Spleen (tissue), 13 donors: ENCODE measurements at regions of chr1 and their contacts with region 1.

Region 1: DNA sequence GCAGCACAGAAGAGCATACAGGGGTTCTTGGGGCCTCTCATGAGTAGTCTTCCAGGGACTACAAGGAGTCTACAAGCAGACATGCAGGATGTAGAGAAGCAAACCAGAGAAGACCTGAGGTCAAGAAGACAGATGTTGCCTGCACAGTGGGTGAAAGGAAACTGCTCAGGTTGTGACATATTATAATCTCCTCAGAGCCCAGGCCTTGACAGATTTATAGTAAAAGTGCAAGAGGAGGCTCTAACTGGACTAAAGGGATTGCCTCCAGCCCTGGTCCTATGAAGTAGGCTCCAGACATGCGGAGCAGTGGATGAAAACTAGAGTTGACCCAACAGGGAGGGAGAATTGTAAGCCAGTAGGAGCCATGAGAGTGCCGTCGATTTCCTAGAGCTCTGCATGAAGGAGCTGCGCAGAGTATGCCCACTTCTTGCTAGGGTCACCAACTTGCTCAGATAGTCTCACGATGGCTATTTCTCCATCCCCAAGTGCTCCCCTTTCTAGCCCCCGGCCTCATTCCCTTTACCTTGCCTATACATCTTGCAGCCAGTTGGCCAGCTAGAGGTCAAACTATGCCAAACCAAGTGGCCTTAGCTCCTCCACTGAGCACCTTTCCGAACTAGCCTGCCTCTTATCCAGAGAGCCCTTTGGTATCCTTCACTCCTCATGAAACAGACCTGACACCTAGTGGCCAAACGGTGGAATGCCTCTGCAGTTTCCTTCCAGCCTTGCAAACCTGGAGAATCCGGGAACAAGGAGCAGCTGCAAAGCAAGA is 36.2 kb upstream of the IPO9 start:
- DNase-seq: no peak
- H3K4me3 ChIP-seq: no peak overlapping the region
- H3K27ac ChIP-seq: peak overlapping the region in 4 of 8 donors; percentile 33 to 52 (median 50)
- H3K4me1 ChIP-seq: peaks cover 0 to 33% (median 24%) of the 10 kb centered on the region in 6 donors
- H3K27me3 ChIP-seq: no peaks in the 10 kb centered on the region
- CTCF ChIP-seq: peak; percentile 83 to 95 (median 92)
- POLR2A ChIP-seq: no peak

Region 2: DNA sequence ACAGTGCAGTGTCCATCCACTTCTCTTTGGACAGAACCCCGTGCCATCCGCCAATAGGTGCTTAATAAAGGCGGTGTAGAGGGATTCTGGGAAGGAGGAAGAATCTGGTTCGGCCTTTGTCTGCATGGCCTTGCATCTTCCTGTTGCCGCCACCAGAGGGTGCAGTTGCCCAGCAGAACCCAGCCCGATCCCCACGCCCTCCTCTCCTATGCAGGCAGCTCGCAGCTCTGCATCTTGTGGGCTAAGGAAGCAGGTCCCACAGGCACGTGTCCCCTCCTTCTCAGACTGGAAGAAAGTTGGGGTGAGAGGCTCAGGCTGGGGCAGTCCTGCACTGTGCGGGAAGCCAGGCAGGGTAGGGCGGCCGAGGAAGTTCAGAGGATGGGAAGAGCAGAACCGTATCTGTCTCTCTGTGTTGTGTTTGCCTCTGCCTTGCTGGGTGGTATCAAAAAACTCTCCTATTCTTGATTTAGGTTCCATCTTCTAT is 233.0 kb before region 1 on chr1:
- intact Hi-C with region 1: loop called (anchors 5 kb)
- DNase-seq: peak; percentile 93
- H3K4me3 ChIP-seq: no peak overlapping the region
- H3K27ac ChIP-seq: no peak overlapping the region
- H3K4me1 ChIP-seq: peaks cover 0 to 55% (median 18%) of the 10 kb centered on the region in 6 donors
- H3K27me3 ChIP-seq: peaks cover 0 to 8% (median 0%) of the 10 kb centered on the region in 7 donors
- CTCF ChIP-seq: peak; percentile 82 to 97 (median 93)
- POLR2A ChIP-seq: no peak

Region 3: GRCh38 chr1:201649761-201650622 is 142.7 kb before region 1 on chr1:
- intact Hi-C with region 1: no loop called
- DNase-seq: no peak
- H3K4me3 ChIP-seq: peak overlapping the region in 6 of 8 donors; percentile 13 to 50 (median 34)
- H3K27ac ChIP-seq: peak overlapping the region in 4 of 8 donors; percentile 27 to 43 (median 30)
- H3K4me1 ChIP-seq: peaks cover 0 to 36% (median 22%) of the 10 kb centered on the region in 6 donors
- H3K27me3 ChIP-seq: peaks cover 0 to 52% (median 23%) of the 10 kb centered on the region in 7 donors
- CTCF ChIP-seq: no peak
- POLR2A ChIP-seq: no peak

Region 4: DNA sequence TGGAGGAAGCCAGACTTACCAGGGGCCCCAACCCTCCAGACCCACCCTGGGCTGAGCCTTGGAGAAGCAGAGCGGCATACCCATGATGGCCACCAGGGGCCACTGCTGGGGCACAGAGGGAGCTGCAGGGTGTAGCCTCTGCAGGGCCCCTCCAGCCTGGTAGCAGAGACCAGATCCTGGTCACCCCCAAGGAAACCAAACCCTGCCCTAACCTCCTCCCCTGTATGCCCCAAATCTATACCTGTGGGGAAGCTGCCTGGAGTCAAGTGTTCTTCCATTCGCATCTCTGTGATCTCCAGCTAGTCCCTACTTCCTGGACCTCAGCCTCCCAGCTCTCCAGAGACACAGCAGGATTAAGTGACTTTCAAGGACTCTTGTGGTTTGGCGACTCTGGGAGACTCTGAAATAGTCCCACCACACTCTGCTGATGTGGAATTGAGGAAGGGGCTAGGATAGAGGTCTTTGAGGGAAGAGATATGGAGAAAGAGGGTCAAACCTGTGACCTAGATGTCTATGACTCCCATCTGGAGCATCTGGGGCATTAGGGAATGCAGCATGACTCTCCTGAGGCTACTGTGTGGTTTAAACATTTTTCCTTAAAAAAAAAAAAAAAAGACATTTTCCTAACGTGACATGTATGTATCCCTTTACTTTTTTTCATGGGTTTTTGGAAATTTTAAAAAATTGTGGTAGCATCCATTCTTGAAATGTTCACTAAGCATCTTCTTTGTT is 83.0 kb before region 1 on chr1:
- intact Hi-C with region 1: loop called (anchors 2 kb)
- DNase-seq: peak; percentile 89
- H3K4me3 ChIP-seq: no peak overlapping the region
- H3K27ac ChIP-seq: no peak overlapping the region
- H3K4me1 ChIP-seq: peaks cover 0 to 45% (median 15%) of the 10 kb centered on the region in 6 donors
- H3K27me3 ChIP-seq: peaks cover 0 to 11% (median 0%) of the 10 kb centered on the region in 7 donors
- CTCF ChIP-seq: peak; percentile 58 to 93 (median 83)
- POLR2A ChIP-seq: no peak

Region 5: GRCh38 chr1:201850053-201850397 is 57.3 kb after region 1 on chr1:
- intact Hi-C with region 1: no loop called
- DNase-seq: no peak
- H3K4me3 ChIP-seq: no peak overlapping the region
- H3K27ac ChIP-seq: no peak overlapping the region
- H3K4me1 ChIP-seq: peaks cover 0 to 14% (median 0%) of the 10 kb centered on the region in 6 donors
- H3K27me3 ChIP-seq: no peaks in the 10 kb centered on the region
- CTCF ChIP-seq: no peak
- POLR2A ChIP-seq: no peak

Region 6: GRCh38 chr1:202101184-202102005 is 308.7 kb after region 1 on chr1:
- intact Hi-C with region 1: no loop called
- DNase-seq: no peak
- H3K4me3 ChIP-seq: no peak overlapping the region
- H3K27ac ChIP-seq: no peak overlapping the region
- H3K4me1 ChIP-seq: no peaks in the 10 kb centered on the region
- H3K27me3 ChIP-seq: no peaks in the 10 kb centered on the region
- CTCF ChIP-seq: no peak
- POLR2A ChIP-seq: no peak